Cardiac septum (tissue), 1 donor: ENCODE measurements at regions of chr1 and their contacts with region 1.

Region 1: GRCh38 chr1:232630047-232630893 is at the start of gene SIPA1L2:
- DNase-seq: peak; percentile 97
- total RNA-seq, gene SIPA1L2: 98.7 TPM

Region 2: DNA sequence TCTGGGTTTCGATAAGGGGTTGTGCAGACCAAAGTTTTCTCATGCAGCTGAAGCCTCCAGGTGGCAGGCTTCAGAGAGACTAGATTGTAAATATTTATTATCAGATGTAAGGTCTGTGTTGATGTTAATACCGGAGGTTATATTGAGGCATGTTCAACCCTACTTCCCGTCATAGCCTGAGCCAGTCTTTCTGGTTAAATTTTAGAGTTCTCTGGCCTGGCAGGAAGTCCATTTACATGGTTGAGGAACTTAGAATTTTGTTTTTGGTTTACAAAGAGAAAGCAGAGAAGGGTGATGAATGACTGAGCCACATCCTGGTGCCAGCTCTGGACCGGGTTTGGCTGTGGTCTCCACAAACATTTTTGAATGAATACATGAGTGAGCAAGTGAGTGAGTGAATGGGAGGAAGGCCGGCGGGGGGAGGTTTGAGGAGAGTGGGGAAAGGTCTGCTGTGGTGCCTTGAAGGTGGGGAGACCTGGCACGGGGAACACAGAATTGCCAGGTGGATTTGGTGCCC is 785.2 kb before region 1 on chr1:
- intact Hi-C with region 1: loop called (anchors 5 kb)
- DNase-seq: no peak

Region 3: GRCh38 chr1:231931846-231932454 is 698.3 kb before region 1 on chr1:
- intact Hi-C with region 1: loop called (anchors 5 kb)
- DNase-seq: no peak

Region 4: DNA sequence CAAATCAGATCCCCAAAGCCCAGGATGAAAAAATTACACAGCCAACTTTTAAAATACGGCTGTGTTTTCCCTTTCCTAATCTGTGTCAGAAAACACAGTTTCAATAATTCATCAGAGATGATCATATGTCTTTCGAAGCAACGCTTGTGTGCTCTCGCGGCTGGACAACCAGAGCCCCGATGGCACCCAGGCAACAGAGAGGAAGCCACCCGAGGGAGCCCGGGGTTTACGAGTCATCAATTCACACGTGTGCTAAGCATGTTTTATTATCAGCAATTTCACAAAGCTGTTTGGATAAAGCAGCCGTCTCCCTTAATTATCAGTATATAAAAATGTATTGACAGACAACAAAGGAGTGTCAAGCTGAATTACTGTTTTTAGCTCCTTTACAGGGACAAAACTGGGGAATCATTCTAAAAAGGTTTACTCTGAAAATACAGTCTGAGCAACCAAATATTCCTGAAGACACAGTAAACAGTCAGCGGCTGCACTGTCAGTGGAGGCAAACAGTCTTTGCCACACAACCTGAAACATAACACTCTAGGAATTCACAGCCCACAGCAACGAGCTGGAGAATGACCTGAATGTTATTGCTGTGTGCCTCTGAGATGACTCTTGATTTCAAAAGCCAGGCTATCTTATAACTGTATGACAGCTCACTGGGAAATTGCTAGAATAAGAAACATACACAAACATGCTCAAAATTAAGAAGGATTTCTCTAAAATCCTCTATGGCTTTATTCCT is 201.3 kb before region 1 on chr1:
- intact Hi-C with region 1: loop called (anchors 2 kb)
- DNase-seq: no peak

Region 5: DNA sequence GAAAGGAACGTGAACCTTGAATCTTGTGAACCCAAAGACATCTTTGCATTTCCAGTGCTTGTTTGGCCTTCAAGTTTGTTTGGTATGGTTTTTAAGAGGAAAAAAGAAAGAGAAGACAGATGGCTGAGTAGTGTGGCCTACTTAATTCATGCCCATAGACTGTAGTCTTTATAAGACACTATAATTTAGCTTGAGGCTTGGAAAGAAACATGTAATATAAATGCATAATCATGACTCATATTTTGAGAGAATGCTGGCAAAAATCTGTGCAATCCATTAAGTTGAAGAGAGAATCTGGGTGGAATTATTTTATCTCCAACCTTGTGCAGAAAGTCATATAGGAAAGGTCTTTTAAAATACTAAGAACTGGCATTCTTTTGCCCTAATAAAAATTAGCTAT is 179.7 kb before region 1 on chr1:
- intact Hi-C with region 1: no loop called
- DNase-seq: no peak

Region 6: DNA sequence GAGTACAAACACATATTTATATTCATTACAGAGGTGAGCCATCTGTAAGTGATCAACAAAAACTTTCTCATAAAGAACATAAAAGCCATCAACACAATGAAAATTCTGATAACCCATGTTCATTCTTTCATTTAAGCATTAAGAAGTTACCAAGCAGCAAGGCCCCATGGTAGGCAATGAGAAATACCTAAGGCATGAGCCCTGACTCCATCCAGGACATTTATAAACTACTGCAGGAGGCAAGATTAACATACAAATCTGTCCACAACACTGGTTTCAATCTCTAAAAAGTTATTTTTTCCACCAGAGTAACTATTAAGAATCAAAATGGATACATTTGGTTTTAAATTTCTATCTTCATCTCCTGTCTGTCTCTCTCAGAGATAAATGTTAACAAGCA is 76.5 kb before region 1 on chr1:
- intact Hi-C with region 1: loop called (anchors 2 kb)
- DNase-seq: no peak

Region 7: DNA sequence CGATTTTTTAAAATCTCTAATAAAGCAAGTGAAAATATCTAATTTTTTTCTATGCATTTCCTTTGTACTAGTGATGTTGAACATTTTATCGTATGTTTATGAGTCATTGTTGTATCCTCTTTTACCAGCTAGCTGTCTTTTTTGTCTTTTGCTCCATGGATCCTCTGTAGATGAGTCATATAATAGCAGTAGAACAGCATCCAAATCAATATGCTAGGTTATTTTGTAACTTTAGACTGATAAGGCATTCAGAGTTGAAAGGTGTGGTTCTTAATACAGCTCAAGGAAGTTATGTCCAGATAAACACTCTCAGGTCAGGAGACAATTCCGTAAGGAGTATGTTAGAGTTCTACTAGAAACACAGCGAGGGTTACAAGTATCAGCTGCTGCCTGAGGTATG is 206.8 kb after region 1 on chr1:
- intact Hi-C with region 1: no loop called
- DNase-seq: no peak